Heart right ventricle (tissue), 16 donors: ENCODE measurements at regions of chr9 and their contacts with region 1.

Region 1: GRCh38 chr9:85600675-85601263 is 141.0 kb downstream of the AGTPBP1 start:
- DNase-seq: no peak
- ATAC-seq: peak; percentile 17 to 79 (median 72)
- H3K4me3 ChIP-seq: no peak overlapping the region
- H3K27ac ChIP-seq: peak overlapping the region in 1 of 10 donors; percentile 29
- H3K4me1 ChIP-seq: peaks cover 0 to 17% (median 10%) of the 10 kb centered on the region in 9 donors
- H3K27me3 ChIP-seq: no peaks in the 10 kb centered on the region
- CTCF ChIP-seq: no peak

Region 2: DNA sequence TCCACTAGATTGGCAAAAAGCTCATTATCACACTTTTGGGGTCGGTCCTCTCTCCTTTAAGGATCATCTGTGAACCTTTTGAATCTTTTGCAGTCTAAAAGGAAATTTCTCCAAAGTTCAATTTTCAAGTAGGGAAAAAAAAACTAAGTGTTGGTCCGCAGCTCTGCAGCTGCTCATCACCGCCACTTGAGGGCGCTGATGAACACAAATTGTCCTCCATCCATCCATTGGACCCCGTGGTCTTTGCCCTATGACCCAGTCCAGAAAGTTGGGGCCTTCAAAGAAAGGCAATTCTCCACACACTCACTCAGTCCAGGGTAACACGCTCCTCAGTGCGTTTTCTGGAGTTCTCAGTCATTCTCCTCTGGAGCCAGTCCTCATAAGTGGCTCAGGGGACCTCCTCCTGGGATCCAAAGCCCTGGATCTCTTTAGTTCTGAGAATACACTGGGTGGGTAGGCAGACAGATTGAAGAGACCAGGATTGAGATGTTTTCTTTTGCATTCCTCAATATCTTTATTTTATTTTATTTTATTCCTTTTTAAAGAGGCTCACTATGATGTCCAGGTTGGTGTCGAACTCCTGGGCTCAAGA is 1196.6 kb before region 1 on chr9:
- intact Hi-C with region 1: loop called in 3 of 10 experiments (anchors 5 to 10 kb)
- DNase-seq: no peak
- ATAC-seq: no peak
- H3K4me3 ChIP-seq: no peak overlapping the region
- H3K27ac ChIP-seq: no peak overlapping the region
- H3K4me1 ChIP-seq: no peaks in the 10 kb centered on the region
- H3K27me3 ChIP-seq: peaks cover 0 to 4% (median 0%) of the 10 kb centered on the region in 7 donors
- CTCF ChIP-seq: peak; percentile 33 to 69 (median 58)

Region 3: GRCh38 chr9:85508616-85509015 is 92.2 kb before region 1 on chr9:
- intact Hi-C with region 1: loop called in 2 of 10 experiments (anchors 10 kb)
- DNase-seq: no peak
- ATAC-seq: no peak
- H3K4me3 ChIP-seq: no peak overlapping the region
- H3K27ac ChIP-seq: no peak overlapping the region
- H3K4me1 ChIP-seq: peaks cover 0 to 7% (median 0%) of the 10 kb centered on the region in 9 donors
- H3K27me3 ChIP-seq: no peaks in the 10 kb centered on the region
- CTCF ChIP-seq: peak in 4 of 9 donors; percentile 5 to 32 (median 18)